Head of caudate nucleus (tissue), 42 donors: ENCODE measurements at regions of chr9 and their contacts with region 1.

Region 1: DNA sequence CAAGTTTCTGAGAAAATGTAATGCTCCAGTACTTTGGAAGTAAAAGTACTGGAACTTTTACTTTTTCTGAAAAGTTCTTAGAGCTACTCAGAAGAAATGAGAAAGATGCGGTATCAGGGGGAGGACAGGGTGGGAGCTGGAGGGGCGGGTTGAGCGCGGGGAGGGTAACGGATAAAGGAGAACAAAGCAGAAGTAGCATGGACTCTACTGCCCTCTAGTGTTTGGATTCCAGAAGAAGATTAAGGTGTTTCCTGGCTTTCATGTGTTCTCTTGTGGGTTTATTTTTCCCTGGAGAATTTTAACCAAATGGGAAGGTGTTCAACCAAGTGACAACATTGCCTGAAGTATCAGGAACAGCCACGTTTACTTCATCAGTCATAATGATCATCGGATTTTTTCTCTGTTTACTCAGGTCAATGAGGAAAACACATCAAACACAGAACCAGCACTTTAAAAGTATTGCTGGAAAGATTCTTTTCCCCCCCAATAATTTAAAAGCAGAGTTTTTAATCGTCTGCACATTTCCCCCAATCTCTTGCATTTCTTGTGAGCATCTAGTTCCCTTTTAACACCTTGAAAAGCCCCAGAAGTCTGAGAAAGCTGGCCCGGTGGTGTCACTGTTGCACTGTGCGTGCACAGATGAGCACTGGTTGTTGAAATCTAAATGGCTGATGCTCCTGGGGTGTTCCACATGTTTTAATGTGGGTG is 190.6 kb downstream of the MPDZ start:
- DNase-seq: peak in 40 of 42 donors; percentile 6 to 69 (median 44)

Region 2: DNA sequence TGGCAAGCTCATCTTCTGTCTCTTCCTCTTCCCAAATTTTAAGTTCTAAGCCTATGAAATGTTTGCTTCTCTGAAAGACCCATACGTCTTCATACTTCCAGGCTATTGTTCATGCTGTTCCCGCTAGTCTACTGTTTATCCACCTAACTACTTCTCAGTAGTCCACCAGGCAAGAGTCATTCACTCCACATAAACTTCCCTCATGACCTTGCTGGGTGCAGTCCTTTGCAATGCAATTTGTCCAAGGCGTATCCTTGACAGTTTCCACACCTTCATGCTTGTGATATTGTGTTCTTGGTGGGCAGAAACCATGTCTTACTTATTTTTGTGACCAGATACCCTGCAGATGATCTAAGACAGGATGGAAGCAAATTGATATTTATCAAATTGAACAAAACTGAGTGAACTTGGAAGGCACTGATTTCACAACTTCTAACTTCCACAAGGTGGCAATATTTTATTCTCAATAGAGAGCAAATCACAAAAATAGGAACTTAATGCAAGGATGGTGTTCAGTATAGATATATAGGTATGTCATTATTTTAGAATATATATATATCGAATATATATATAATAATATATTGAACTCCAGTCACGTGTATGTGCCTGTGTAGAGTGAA is 365.4 kb before region 1 on chr9:
- intact Hi-C with region 1: loop called (anchors 5 kb)
- DNase-seq: no peak

Region 3: GRCh38 chr9:13033959-13034693 is 54.7 kb before region 1 on chr9:
- intact Hi-C with region 1: loop called (anchors 5 kb)
- DNase-seq: peak; percentile 50 to 87 (median 76)

Region 4: DNA sequence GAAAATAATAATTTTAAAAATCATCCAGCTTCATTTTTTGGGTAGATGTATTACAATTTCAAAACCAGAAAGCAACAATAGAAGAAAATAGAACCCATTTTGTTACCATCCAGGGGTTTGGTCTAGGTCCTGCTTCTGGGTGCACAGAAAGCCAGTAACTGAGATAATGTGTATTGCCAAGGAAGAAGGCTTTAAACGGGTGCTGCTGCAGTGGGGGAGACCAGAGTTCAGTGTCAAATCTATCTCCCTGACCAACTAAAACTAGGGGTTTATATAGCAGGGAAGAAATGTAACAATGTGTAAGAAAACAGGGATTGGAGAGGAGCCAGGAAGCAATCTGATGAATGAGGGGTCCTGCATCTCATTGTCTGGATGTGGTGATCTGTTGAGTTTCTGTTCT is 208.1 kb after region 1 on chr9:
- intact Hi-C with region 1: no loop called
- DNase-seq: no peak